Esophagus squamous epithelium (tissue), 5 donors: ENCODE measurements at regions of chr2 and their contacts with region 1.

Region 1: GRCh38 chr2:96856776-96857673 is 791 bp downstream of the ANKRD39 start:
- DNase-seq: no peak
- H3K4me3 ChIP-seq: peak overlapping the region; percentile 75 to 87 (median 78)
- H3K27ac ChIP-seq: peak overlapping the region; percentile 82 to 90 (median 88)
- H3K4me1 ChIP-seq: peaks cover 16 to 70% (median 47%) of the 10 kb centered on the region in 3 donors
- H3K27me3 ChIP-seq: no peaks in the 10 kb centered on the region
- CTCF ChIP-seq: no peak
- POLR2A ChIP-seq: no peak

Region 2: DNA sequence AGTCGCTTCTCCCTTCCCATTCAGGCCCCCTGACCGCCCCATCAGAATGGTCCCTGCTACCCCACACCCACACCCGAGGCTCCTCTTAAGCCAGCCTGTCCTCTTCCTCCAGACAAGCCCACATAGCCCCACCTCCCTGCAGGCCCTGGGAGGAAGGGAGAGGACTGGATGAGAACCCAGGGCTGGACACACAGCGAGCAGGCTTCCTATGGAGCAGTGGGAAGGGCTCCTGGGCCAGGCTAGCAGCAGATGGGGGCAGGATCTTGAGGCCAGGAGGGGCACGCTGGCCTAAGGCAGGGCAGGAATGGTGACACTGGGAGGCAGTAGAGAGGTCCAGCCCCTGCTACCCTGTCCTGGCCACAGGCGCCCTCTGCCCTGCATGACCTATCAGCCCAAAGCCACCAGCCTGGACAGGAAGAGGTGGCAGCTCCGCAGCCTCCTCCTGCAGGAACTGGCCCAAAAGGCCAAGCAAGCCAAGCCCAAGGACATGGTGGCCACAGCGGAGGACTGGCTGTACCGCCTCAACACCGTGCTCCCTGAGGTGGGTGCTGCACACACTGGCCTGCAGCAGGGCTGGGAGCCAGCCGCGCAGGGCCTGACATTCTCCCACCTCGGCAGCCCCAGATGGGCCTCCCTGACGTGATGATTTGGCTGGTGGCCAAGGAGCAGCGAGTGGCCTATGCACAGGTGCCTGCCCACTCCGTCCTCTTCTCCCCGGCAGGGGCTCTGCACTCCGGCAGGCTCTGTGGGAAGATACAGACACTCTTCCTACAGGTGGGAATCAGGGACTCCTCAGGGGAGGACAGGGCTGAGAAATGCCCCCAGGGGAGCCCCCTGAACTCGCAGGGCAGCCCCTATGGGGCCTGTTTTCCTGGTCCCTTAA is 171.2 kb before region 1 on chr2:
- intact Hi-C with region 1: no loop called
- DNase-seq: no peak
- H3K4me3 ChIP-seq: no peak overlapping the region
- H3K27ac ChIP-seq: no peak overlapping the region
- H3K4me1 ChIP-seq: peaks cover 0 to 11% (median 0%) of the 10 kb centered on the region in 3 donors
- H3K27me3 ChIP-seq: peaks cover 0 to 29% (median 0%) of the 10 kb centered on the region in 4 donors
- CTCF ChIP-seq: no peak
- POLR2A ChIP-seq: no peak

Region 3: DNA sequence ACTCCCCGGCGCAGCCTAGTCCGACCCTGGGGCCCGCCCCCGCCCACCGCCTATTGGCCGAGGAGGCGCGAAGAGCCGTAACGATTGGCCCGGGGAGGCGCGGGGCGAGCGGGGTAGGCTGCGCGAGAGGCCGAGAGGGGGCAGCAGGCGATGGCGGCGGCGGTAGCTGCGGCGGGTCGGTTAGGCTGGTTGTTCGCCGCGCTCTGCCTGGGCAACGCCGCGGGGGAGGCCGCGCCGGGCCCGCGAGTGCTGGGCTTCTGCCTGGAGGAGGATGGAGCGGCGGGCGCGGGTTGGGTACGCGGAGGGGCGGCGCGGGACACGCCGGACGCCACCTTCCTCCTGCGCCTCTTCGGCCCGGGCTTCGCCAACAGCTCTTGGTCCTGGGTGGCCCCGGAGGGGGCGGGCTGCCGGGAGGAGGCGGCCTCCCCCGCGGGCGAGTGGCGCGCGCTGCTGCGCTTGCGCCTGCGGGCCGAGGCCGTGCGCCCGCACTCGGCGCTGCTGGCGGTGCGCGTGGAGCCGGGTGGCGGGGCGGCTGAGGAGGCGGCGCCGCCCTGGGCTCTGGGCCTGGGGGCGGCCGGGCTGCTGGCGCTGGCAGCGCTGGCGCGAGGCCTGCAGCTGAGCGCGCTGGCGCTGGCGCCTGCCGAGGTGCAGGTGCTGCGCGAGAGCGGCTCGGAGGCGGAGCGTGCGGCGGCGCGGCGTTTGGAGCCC is 40.7 kb before region 1 on chr2 and contains the start of gene CNNM3:
- intact Hi-C with region 1: loop called (anchors 5 kb)
- DNase-seq: peak; percentile 60
- H3K4me3 ChIP-seq: peak within 1 kb of the TSS; percentile 63 to 91 (median 75)
- H3K27ac ChIP-seq: peak within 1 kb of the TSS; percentile 87 to 99 (median 94)
- H3K4me1 ChIP-seq: peaks cover 23 to 51% (median 32%) of the 10 kb centered on the region in 3 donors
- H3K27me3 ChIP-seq: no peaks in the 10 kb centered on the region
- CTCF ChIP-seq: peak; percentile 48 to 77 (median 66)
- POLR2A ChIP-seq: peak in 3 of 4 donors; percentile 26 to 88 (median 70)
- total RNA-seq, gene CNNM3: 3.7 to 10.2 (median 5.5) TPM

Region 4: DNA sequence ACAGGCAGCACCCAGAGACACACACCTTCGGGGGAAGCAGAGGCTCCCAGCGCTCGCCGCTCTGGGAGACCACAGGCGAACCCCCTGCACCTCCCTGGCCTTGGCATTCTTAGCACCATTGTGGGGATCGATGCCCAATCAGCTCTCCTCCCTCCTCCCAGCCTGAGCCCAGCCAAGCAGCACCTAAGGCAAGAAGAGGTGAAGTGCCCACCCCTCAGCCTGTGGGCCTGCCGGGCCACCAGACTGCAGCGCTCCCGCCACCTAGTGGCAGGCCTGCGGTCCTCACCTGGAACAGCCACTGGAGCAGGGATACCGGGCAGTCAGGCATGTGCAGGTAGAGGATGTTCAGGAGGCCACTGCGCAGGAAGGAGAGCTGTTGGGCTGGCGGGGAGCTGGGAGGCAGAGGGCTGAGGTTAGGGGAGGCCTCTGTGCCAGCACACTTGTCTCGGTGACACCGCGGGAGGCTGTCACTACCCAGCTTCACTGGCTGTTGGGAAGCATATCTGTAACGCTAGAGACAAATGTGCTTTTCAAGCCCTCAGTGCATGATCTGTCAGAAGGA is 94.1 kb after region 1 on chr2:
- intact Hi-C with region 1: loop called (anchors 5 kb)
- DNase-seq: no peak
- H3K4me3 ChIP-seq: no peak overlapping the region
- H3K27ac ChIP-seq: peak overlapping the region in 1 of 4 donors; percentile 1
- H3K4me1 ChIP-seq: peaks cover 15 to 56% (median 39%) of the 10 kb centered on the region in 3 donors
- H3K27me3 ChIP-seq: peaks cover 0 to 9% (median 0%) of the 10 kb centered on the region in 4 donors
- CTCF ChIP-seq: peak; percentile 91 to 98 (median 94)
- POLR2A ChIP-seq: no peak